Activated CD8-positive, alpha-beta T cell treated with anti-CD3 and anti-CD28 coated beads for 36 hours (primary cell): ENCODE measurements at regions of chr7 and their contacts with region 1.

Region 1: GRCh38 chr7:55309040-55309991 is 55.8 kb upstream of the LANCL2 start:
- DNase-seq: peak; percentile 94
- ATAC-seq: peak; percentile 88
- H3K4me3 Mint-ChIP-seq: peak overlapping the region; percentile 12
- H3K27ac Mint-ChIP-seq: peak overlapping the region; percentile 86
- H3K4me1 Mint-ChIP-seq: peaks cover 28% of the 10 kb centered on the region
- H3K27me3 Mint-ChIP-seq: peaks cover 11% of the 10 kb centered on the region
- CTCF ChIP-seq: no peak

Region 2: DNA sequence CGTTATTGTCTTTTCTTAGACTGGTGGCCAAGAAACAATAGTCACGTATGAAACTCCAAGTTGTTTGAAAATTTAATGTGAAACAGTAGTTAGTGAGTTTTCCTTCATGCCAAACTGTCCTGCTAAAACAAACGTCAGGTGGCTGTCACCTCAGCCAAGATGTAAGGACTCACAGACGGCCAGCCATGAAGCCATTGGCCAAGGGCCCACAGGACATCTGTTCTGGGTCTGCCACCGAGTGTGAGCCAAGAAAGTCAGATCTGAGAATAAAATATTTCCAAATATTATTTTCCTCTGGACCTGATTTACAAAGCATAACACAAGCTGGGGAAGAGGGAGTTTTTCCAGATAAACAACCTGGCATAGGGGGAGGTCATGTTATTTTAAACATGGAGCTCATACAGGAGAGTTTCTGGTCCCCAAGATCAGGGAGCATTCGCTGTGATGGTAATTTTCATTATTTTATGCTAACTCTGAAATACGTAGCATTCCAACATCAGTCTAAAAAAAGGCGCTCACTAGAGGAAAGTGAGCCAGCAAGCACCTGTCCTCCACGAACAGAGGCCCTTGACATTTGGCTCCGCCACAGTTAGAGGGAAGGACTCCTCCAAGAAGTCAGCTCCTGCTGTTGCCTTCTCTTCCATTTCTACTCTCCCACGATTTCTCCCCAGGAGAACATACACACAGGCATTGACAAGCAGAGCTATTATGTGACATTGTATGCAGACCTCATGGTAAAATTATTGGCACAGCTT is 16.9 kb after region 1 on chr7:
- CTCF ChIA-PET with region 1: no interaction called
- POLR2A ChIA-PET with region 1: no interaction called
- intact Hi-C with region 1: no loop called
- DNase-seq: no peak
- ATAC-seq: no peak
- H3K4me3 Mint-ChIP-seq: no peak overlapping the region
- H3K27ac Mint-ChIP-seq: no peak overlapping the region
- H3K4me1 Mint-ChIP-seq: no peaks in the 10 kb centered on the region
- H3K27me3 Mint-ChIP-seq: peaks cover 1% of the 10 kb centered on the region
- CTCF ChIP-seq: no peak

Region 3: GRCh38 chr7:55348499-55348898 is 39.2 kb after region 1 on chr7:
- CTCF ChIA-PET with region 1: no interaction called
- POLR2A ChIA-PET with region 1: no interaction called
- intact Hi-C with region 1: loop called (anchors 5 kb)
- DNase-seq: no peak
- ATAC-seq: peak; percentile 64
- H3K4me3 Mint-ChIP-seq: no peak overlapping the region
- H3K27ac Mint-ChIP-seq: no peak overlapping the region
- H3K4me1 Mint-ChIP-seq: peaks cover 5% of the 10 kb centered on the region
- H3K27me3 Mint-ChIP-seq: peaks cover 15% of the 10 kb centered on the region
- CTCF ChIP-seq: no peak

Region 4: GRCh38 chr7:55365675-55366460 is 56.6 kb after region 1 on chr7:
- CTCF ChIA-PET with region 1: interaction called, 4 read pairs
- POLR2A ChIA-PET with region 1: interaction called, 6 read pairs
- intact Hi-C with region 1: loop called (anchors 5 kb)
- DNase-seq: peak; percentile 93
- ATAC-seq: peak; percentile 89
- H3K4me3 Mint-ChIP-seq: peak overlapping the region; percentile 96
- H3K27ac Mint-ChIP-seq: peak overlapping the region; percentile 97
- H3K4me1 Mint-ChIP-seq: peaks cover 11% of the 10 kb centered on the region
- H3K27me3 Mint-ChIP-seq: no peaks in the 10 kb centered on the region
- CTCF ChIP-seq: peak; percentile 43

Region 5: GRCh38 chr7:55415173-55415778 is 106.0 kb after region 1 on chr7:
- CTCF ChIA-PET with region 1: interaction called, 10 read pairs
- POLR2A ChIA-PET with region 1: no interaction called
- intact Hi-C with region 1: no loop called
- DNase-seq: peak; percentile 92
- ATAC-seq: peak; percentile 95
- H3K4me3 Mint-ChIP-seq: no peak overlapping the region
- H3K27ac Mint-ChIP-seq: no peak overlapping the region
- H3K4me1 Mint-ChIP-seq: peaks cover 2% of the 10 kb centered on the region
- H3K27me3 Mint-ChIP-seq: no peaks in the 10 kb centered on the region
- CTCF ChIP-seq: peak; percentile 82